GM12878 (cell line): ENCODE measurements at regions of chr19 and their contacts with region 1.

Region 1: GRCh38 chr19:2950286-2951124 is 5.7 kb upstream of the ZNF77 start:
- DNase-seq: peak; percentile 99
- ATAC-seq: peak; percentile 99
- H3K4me3 ChIP-seq: peak overlapping the region; percentile 83
- H3K27ac ChIP-seq: peak overlapping the region; percentile 85
- H3K4me1 ChIP-seq: peaks cover 3% of the 10 kb centered on the region
- H3K27me3 ChIP-seq: no peaks in the 10 kb centered on the region
- CTCF ChIP-seq: no peak
- EP300 ChIP-seq: no peak
- POLR2A ChIP-seq: peak; percentile 97
- RAD21 ChIP-seq: no peak

Region 2: GRCh38 chr19:2663920-2664571 is 286.5 kb before region 1 on chr19:
- CTCF ChIA-PET with region 1: no interaction called
- POLR2A ChIA-PET with region 1: no interaction called
- RAD21 ChIA-PET with region 1: no interaction called
- SMC1A ChIA-PET with region 1: no interaction called
- in situ Hi-C with region 1: no loop called
- intact Hi-C with region 1: no loop called
- DNase-seq: no peak
- ATAC-seq: peak; percentile 92
- H3K4me3 ChIP-seq: no peak overlapping the region
- H3K27ac ChIP-seq: peak overlapping the region; percentile 47
- H3K4me1 ChIP-seq: peaks cover 23% of the 10 kb centered on the region
- H3K27me3 ChIP-seq: no peaks in the 10 kb centered on the region
- CTCF ChIP-seq: peak in 2 of 3 experiments; percentile 38 to 39; a peak in 3 of 6 replicates
- EP300 ChIP-seq: peak in 1 of 2 experiments; percentile 50; a peak in 1 of 4 replicates
- POLR2A ChIP-seq: no peak
- RAD21 ChIP-seq: peak; percentile 67

Region 3: DNA sequence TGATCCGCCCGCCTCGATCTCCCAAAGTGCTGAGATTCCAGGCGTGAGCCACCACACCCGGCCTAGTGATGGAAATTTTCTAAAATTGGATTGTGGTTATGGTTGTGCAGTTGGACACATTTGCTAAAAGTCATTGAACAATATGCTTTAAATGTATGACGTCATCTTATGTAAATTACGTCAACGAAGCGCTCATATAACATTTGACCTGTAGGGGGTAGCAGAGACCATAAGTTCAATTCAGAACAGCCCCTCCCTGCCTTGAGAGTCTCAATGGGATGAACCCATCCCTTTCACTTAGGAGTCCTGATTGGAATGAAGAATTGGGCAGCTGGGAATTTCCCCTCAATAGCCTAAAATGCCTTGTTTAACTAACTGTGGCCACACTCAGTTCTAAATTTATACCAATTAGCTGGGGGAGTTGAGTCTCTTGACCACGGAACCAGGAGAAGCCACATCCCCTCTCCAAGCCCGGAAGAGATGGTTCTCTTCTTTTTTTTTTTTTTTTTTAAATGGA is 11.6 kb after region 1 on chr19:
- CTCF ChIA-PET with region 1: interaction called, 32 read pairs
- POLR2A ChIA-PET with region 1: no interaction called
- RAD21 ChIA-PET with region 1: interaction called, 4 read pairs
- SMC1A ChIA-PET with region 1: interaction called, 3 read pairs
- in situ Hi-C with region 1: no loop called
- intact Hi-C with region 1: no loop called
- DNase-seq: peak; percentile 65
- ATAC-seq: peak; percentile 78
- H3K4me3 ChIP-seq: no peak overlapping the region
- H3K27ac ChIP-seq: no peak overlapping the region
- H3K4me1 ChIP-seq: peaks cover 4% of the 10 kb centered on the region; the same call in 1 of the 2 replicates
- H3K27me3 ChIP-seq: no peaks in the 10 kb centered on the region
- CTCF ChIP-seq: peak; percentile 63 to 94 (median 65); a peak in 5 of 6 replicates
- EP300 ChIP-seq: no peak
- POLR2A ChIP-seq: no peak
- RAD21 ChIP-seq: peak; percentile 82

Region 4: GRCh38 chr19:3035542-3036118 is 85.1 kb after region 1 on chr19:
- CTCF ChIA-PET with region 1: interaction called, 18 read pairs
- POLR2A ChIA-PET with region 1: interaction called, 8 read pairs
- RAD21 ChIA-PET with region 1: interaction called, 15 read pairs
- SMC1A ChIA-PET with region 1: interaction called, 12 read pairs
- in situ Hi-C with region 1: no loop called
- intact Hi-C with region 1: no loop called
- DNase-seq: peak; percentile 98
- ATAC-seq: peak; percentile 95
- H3K4me3 ChIP-seq: peak overlapping the region; percentile 90
- H3K27ac ChIP-seq: peak overlapping the region; percentile 71
- H3K4me1 ChIP-seq: peaks cover 16% of the 10 kb centered on the region
- H3K27me3 ChIP-seq: no peaks in the 10 kb centered on the region; a peak in 1 of 4 replicates
- CTCF ChIP-seq: no peak
- EP300 ChIP-seq: no peak
- POLR2A ChIP-seq: peak; percentile 78
- RAD21 ChIP-seq: no peak

Region 5: DNA sequence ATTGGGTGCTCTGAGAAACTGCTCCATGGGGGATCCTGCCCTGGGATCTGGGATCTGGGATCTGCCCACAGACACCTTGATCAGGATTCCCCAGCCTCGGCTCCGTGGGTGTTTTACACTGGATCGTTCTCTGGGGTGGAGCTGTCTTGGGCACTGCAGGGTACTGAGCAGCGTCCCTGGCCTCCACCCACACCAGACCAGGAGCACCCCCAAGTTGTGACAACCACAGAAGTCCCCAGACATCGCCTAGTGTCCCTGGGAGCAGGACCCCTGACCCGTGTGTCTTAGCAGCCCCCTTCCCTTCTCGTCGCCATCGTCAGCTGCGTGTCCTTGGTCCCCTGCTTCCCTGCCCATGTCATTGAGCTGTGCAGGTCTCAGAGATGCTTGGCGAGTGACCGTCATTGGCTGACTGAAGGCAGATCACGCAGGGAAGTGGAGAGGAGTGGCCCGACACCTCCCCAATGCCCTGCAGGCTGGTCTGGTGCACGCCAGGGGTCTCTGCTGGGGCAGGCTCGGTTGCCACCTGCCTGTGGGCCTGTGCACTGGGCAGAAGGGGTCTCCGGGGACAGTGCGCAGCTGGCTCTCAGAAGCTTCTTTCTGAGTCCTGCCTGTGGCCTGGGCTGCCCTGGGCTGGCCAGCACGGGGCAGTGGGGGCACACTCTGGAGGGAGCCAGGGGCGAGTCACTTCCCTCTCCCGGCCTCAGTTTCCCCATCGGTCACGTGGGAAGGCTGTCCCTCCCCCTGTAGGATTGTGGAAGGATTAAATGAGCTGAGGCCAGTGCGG is 149.8 kb after region 1 on chr19:
- CTCF ChIA-PET with region 1: interaction called, 43 read pairs
- POLR2A ChIA-PET with region 1: no interaction called
- RAD21 ChIA-PET with region 1: interaction called, 10 read pairs
- SMC1A ChIA-PET with region 1: interaction called, 11 read pairs
- in situ Hi-C with region 1: no loop called
- intact Hi-C with region 1: no loop called
- DNase-seq: no peak
- ATAC-seq: no peak
- H3K4me3 ChIP-seq: no peak overlapping the region
- H3K27ac ChIP-seq: no peak overlapping the region
- H3K4me1 ChIP-seq: peaks cover 11% of the 10 kb centered on the region
- H3K27me3 ChIP-seq: no peaks in the 10 kb centered on the region; a peak in 2 of 4 replicates
- CTCF ChIP-seq: no peak
- EP300 ChIP-seq: no peak
- POLR2A ChIP-seq: no peak
- RAD21 ChIP-seq: no peak

Region 6: GRCh38 chr19:3210347-3211017 is 260.0 kb after region 1 on chr19:
- CTCF ChIA-PET with region 1: interaction called, 11 read pairs
- POLR2A ChIA-PET with region 1: no interaction called
- RAD21 ChIA-PET with region 1: no interaction called
- SMC1A ChIA-PET with region 1: interaction called, 3 read pairs
- in situ Hi-C with region 1: no loop called
- intact Hi-C with region 1: no loop called
- DNase-seq: no peak
- ATAC-seq: peak; percentile 96
- H3K4me3 ChIP-seq: no peak overlapping the region
- H3K27ac ChIP-seq: no peak overlapping the region
- H3K4me1 ChIP-seq: no peaks in the 10 kb centered on the region
- H3K27me3 ChIP-seq: no peaks in the 10 kb centered on the region
- CTCF ChIP-seq: peak; percentile 75 to 92 (median 81)
- EP300 ChIP-seq: no peak
- POLR2A ChIP-seq: peak; percentile 53; the same call in 1 of the 2 replicates
- RAD21 ChIP-seq: peak; percentile 47